ENCODE measurements at regions of chr18 and their contacts with region 1.

Region 1: DNA sequence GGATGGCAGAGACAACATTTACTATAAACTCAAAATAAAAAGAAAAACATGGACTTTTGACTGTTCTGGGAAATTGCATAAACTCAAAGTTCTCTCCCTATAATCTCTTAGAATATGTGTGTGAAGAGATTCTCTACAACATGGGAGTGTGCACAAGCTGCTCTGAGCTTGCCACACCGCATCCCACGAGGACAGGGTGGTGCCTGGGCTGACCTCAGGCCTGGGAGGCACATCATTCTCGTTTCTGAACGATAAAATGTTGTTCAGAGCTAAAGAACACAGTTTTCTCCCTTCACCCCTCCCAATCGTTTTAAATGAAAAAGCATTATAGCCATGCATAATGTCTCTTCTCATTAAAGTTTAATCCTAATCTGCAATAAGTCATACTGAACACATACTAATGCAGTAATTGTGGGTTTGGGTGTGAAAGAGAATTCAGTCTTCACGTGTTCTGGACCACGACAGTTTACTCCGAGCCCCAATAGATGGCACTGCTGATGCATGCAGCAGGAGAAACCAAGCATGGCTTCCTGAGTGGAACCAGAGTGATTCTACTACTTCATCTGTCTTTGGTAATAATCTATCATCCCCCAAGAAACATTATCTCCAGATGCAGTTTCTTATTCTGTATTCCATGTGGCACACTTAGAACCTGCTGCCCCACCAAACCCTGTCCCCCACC is 46.9 kb upstream of the LAMA1 start:
- DNase-seq: no peak
- H3K4me3 ChIP-seq: no peak overlapping the region
- H3K27me3 ChIP-seq: no peaks in the 10 kb centered on the region
- CTCF ChIP-seq: peak; percentile 41

Region 2: DNA sequence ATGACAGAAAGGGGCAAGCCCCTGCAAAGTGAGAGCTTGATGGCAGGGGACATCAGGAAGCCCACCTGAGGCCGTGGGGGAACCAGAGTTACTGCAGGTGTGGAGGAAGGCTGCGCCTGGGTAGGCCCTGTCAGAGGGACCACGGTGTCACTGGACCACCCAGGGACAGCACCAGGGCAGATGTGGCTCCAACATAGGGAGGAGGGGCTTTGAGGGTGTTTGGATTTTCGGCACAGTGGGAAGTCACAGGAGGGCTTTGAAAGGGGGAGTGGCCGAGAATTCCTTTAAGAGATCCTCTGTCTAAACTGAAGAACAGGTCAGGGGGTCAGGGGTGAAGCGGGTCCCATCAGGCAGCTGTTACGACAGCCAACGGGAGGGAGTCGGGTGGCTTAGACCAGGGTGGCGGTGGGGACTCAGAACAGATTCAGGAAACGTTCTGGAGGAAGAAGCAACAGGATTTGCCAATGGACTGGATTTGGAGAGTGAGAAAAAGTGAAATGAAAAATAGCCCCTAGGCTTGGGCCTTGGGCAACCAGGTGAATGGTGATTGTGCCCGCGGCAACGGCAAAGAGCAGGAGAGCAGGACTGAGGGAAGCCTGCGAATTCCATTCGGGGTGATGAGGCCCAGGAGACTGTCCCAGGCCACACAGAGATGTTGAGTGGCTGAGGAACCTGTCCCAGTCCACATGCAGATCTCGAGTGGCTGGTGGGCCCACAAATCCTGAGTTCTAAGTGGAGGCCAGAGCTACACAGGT is 213.0 kb before region 1 on chr18:
- CTCF ChIA-PET with region 1: no interaction called
- POLR2A ChIA-PET with region 1: interaction called, 13 read pairs
- DNase-seq: no peak
- H3K4me3 ChIP-seq: no peak overlapping the region
- H3K27me3 ChIP-seq: no peaks in the 10 kb centered on the region
- CTCF ChIP-seq: no peak

Region 3: GRCh38 chr18:7257426-7257740 is 92.9 kb after region 1 on chr18:
- CTCF ChIA-PET with region 1: no interaction called
- POLR2A ChIA-PET with region 1: interaction called, 18 read pairs
- DNase-seq: no peak
- H3K4me3 ChIP-seq: no peak overlapping the region
- H3K27me3 ChIP-seq: no peaks in the 10 kb centered on the region; the same call in 1 of the 2 replicates
- CTCF ChIP-seq: no peak

Measured in BJ (cell line).